T-cell (primary cell): ENCODE measurements at regions of chr11 and their contacts with region 1.

Region 1: GRCh38 chr11:70378509-70379134 is 19.7 kb upstream of the CTTN start:
- DNase-seq: no peak
- ATAC-seq: no peak
- H3K4me3 ChIP-seq: no peak overlapping the region
- H3K4me3 Mint-ChIP-seq: no peak overlapping the region
- H3K27ac ChIP-seq: no peak overlapping the region
- H3K27ac Mint-ChIP-seq: no peak overlapping the region
- H3K4me1 ChIP-seq: no peaks in the 10 kb centered on the region
- H3K4me1 Mint-ChIP-seq: no peaks in the 10 kb centered on the region
- H3K27me3 ChIP-seq: no peaks in the 10 kb centered on the region
- H3K27me3 Mint-ChIP-seq: no peaks in the 10 kb centered on the region

Region 2: GRCh38 chr11:70397336-70397982 is 18.8 kb after region 1 on chr11:
- CTCF ChIA-PET with region 1: no interaction called
- POLR2A ChIA-PET with region 1: no interaction called
- DNase-seq: peak in 4 of 35 experiments; percentile 5 to 13 (median 8)
- ATAC-seq: peak in 1 of 4 experiments; percentile 9
- H3K4me3 ChIP-seq: peak overlapping the region; percentile 46 to 88
- H3K4me3 Mint-ChIP-seq: peak overlapping the region; percentile 72 to 90 (median 83)
- H3K27ac ChIP-seq: no peak overlapping the region
- H3K27ac Mint-ChIP-seq: peak overlapping the region in 1 of 2 donors; percentile 59
- H3K4me1 ChIP-seq: peaks cover 3 to 22% of the 10 kb centered on the region in 2 experiments
- H3K4me1 Mint-ChIP-seq: peaks cover 12 to 16% (median 13%) of the 10 kb centered on the region in 3 donors
- H3K27me3 ChIP-seq: peaks cover 2 to 65% of the 10 kb centered on the region in 2 experiments
- H3K27me3 Mint-ChIP-seq: peaks cover 23 to 31% of the 10 kb centered on the region in 2 donors

Region 3: DNA sequence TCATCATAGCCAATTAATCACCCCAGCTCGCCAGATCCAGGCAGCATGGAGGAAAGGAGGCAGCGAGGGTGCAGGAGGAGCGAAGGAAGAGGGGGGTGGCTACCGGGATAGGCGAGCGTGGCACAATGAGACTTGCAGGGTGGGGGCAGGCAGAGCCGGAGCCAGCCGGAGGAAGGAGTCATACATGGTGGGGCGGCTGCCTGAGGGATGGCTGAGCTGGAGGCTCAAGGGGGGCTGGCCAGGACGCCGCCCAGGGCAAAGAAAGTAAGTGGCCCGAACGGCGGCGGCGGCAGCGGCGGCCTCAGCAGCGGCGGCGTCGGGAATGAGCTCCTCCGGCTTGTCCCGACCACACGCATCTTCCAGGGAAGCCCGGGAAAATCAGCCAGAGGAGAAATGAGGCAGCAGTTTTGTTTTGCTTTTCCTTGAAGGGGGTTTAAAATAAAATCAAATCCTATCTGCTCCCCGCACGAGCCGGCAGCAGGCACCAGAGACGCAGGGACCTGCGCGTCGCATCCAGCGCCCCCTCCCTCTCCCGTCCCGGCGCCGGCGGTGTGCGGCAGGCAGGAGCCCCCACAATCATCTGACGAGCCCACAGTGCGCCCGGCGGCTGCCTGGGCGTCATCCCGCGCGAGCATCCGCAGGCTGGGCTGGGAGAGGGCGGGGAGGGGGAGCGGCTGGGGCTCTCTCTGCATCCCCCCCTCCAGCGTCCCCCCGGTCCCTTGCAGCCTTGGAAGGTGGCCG is 283.3 kb after region 1 on chr11:
- CTCF ChIA-PET with region 1: no interaction called
- POLR2A ChIA-PET with region 1: interaction called in 1 of 2 experiments, 10 read pairs
- DNase-seq: no peak
- ATAC-seq: no peak
- H3K4me3 ChIP-seq: no peak overlapping the region
- H3K4me3 Mint-ChIP-seq: peak overlapping the region in 1 of 3 donors; percentile 20
- H3K27ac ChIP-seq: no peak overlapping the region
- H3K27ac Mint-ChIP-seq: no peak overlapping the region
- H3K4me1 ChIP-seq: no peaks in the 10 kb centered on the region
- H3K4me1 Mint-ChIP-seq: peaks cover 0 to 5% (median 3%) of the 10 kb centered on the region in 3 donors
- H3K27me3 ChIP-seq: peaks cover 0 to 62% of the 10 kb centered on the region in 2 experiments
- H3K27me3 Mint-ChIP-seq: peaks cover 32 to 51% of the 10 kb centered on the region in 2 donors